Activated naive CD4-positive, alpha-beta T cell treated with anti-CD3 and anti-CD28 coated beads for 36 hours (primary cell): ENCODE measurements at regions of chr16 and their contacts with region 1.

Region 1: DNA sequence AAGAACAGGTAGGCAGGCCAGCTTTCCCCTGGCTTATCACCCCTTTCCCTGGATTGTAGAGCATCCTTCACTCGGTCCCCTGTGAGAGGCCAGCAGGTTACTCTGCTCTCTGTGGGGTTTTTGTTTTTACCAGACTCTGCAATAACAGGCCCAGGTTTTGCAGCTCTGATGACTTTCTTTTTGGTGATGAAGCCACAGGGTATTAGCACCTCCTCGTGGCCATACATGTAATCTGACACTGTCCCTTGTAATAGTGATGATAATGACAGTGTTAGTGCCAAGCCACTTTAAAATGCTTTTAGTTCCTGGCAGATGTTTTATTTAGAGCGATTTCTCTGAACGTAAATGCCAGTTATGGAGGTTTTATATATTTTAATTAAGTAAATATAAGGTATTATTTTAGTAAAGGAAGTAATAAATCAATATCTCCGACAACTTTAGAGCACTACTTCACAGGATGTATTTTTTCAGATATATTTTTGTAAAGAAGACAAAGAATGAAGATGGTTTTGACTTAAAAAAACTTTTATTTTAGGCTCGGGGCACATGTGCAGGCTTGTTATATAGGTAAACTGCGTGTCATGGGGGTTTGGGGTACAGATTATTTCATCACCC is 38.0 kb upstream of the CPHXL start:
- DNase-seq: peak; percentile 77
- H3K4me3 Mint-ChIP-seq: no peak overlapping the region
- H3K27ac Mint-ChIP-seq: no peak overlapping the region
- H3K4me1 Mint-ChIP-seq: peaks cover 12% of the 10 kb centered on the region
- H3K27me3 Mint-ChIP-seq: peaks cover 3% of the 10 kb centered on the region

Region 2: GRCh38 chr16:75385507-75386152 is 378.6 kb before region 1 on chr16:
- CTCF ChIA-PET with region 1: no interaction called
- intact Hi-C with region 1: loop called (anchors 5 kb)
- DNase-seq: no peak
- H3K4me3 Mint-ChIP-seq: no peak overlapping the region
- H3K27ac Mint-ChIP-seq: no peak overlapping the region
- H3K4me1 Mint-ChIP-seq: peaks cover 19% of the 10 kb centered on the region
- H3K27me3 Mint-ChIP-seq: peaks cover 2% of the 10 kb centered on the region

Region 3: DNA sequence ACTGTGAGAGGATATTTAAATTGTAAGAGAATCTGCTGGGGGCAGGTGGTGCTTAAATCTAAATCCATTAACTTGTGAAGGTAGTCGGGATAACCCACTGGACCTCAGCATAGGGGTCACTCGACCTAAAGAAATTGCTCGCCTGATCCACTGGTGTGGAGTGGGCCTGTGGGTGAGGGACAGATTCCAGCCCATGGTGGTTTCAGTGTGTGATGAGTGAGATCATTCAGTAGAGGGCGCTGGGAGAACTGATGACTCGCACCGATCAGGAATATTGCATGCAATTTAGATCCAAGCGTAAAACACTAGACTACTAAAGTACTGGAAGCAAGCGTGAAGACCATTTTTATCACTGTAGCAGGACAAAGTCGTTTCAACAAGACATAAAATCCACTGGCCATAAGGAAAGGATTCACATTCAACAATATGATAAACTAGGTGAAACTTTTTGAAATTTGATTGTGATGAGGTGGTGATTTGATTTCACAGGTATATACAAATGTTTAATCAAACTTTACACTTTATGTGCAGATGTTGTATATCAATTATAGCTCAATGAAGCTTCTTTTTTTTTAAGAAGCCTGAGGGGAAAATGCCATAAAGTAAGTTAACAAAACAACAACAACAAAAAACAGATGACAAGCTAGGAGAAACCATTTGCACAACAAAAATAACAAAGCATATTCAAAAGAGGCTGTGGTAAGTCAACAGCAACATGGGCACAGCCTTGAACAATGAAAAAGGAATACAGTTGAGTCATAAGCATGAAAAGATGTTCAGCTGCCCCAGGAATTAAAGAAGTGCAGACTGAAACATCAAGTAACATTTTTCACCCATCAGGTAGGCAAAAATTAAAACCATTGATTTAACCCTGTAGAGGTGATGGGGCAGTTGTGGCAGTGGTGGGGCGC is 292.3 kb before region 1 on chr16:
- CTCF ChIA-PET with region 1: interaction called, 15 read pairs
- intact Hi-C with region 1: loop called (anchors 1 kb)
- DNase-seq: peak; percentile 56
- H3K4me3 Mint-ChIP-seq: no peak overlapping the region
- H3K27ac Mint-ChIP-seq: no peak overlapping the region
- H3K4me1 Mint-ChIP-seq: peaks cover 1% of the 10 kb centered on the region
- H3K27me3 Mint-ChIP-seq: no peaks in the 10 kb centered on the region

Region 4: GRCh38 chr16:75647492-75648264 is 116.6 kb before region 1 on chr16 and contains the starts of genes KARS1 and TERF2IP:
- CTCF ChIA-PET with region 1: interaction called, 7 read pairs
- intact Hi-C with region 1: loop called (anchors 1 kb)
- DNase-seq: peak; percentile 96
- H3K4me3 Mint-ChIP-seq: peak within 1 kb of the TSS; percentile 96
- H3K27ac Mint-ChIP-seq: peak within 1 kb of the TSS; percentile 98
- H3K4me1 Mint-ChIP-seq: peaks cover 62% of the 10 kb centered on the region
- H3K27me3 Mint-ChIP-seq: no peaks in the 10 kb centered on the region
- total RNA-seq, gene KARS1: 371 to 385 TPM
- total RNA-seq, gene TERF2IP: 78.6 to 79.0 TPM

Region 5: GRCh38 chr16:75695704-75696103 is 68.6 kb before region 1 on chr16:
- CTCF ChIA-PET with region 1: no interaction called
- intact Hi-C with region 1: loop called (anchors 5 kb)
- DNase-seq: no peak
- H3K4me3 Mint-ChIP-seq: no peak overlapping the region
- H3K27ac Mint-ChIP-seq: no peak overlapping the region
- H3K4me1 Mint-ChIP-seq: no peaks in the 10 kb centered on the region
- H3K27me3 Mint-ChIP-seq: no peaks in the 10 kb centered on the region